Thyroid gland (tissue), 4 donors: ENCODE measurements at regions of chr2 and their contacts with region 1.

Region 1: DNA sequence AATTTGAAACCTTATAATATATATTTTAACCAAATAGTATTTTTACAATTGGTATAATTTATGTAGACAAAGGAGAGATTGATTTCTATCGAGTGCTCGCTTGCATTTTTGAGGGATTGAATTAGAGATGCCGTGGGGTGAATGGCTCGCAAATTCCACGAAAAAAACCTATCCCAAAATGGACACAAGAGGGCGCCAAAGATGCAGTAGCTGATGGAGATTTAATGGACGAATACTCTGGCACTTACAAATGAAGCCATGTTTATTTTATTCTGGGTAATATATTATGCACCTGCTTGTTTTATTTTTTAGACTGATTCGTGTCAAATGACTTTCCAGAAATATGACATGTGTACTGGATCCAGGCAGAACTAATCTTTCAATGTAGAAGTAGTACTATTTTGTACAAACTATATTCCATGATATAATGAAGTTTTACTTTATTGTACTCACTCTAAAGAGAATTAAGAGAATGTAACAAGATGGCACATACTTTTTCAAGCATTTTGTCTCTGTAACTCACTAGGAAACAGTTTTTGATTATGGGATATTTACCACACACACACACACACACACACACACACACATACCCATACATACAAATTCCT is 505.4 kb downstream of the PLCL1 start:
- DNase-seq: peak; percentile 25 to 34
- H3K4me3 ChIP-seq: no peak overlapping the region
- H3K27ac ChIP-seq: no peak overlapping the region
- H3K4me1 ChIP-seq: no peaks in the 10 kb centered on the region
- H3K27me3 ChIP-seq: no peaks in the 10 kb centered on the region
- CTCF ChIP-seq: peak; percentile 47 to 90 (median 58)
- POLR2A ChIP-seq: no peak

Region 2: GRCh38 chr2:198162276-198162675 is 147.5 kb before region 1 on chr2:
- intact Hi-C with region 1: no loop called
- DNase-seq: no peak
- H3K4me3 ChIP-seq: no peak overlapping the region
- H3K27ac ChIP-seq: no peak overlapping the region
- H3K4me1 ChIP-seq: no peaks in the 10 kb centered on the region
- H3K27me3 ChIP-seq: no peaks in the 10 kb centered on the region
- CTCF ChIP-seq: no peak
- POLR2A ChIP-seq: no peak

Region 3: DNA sequence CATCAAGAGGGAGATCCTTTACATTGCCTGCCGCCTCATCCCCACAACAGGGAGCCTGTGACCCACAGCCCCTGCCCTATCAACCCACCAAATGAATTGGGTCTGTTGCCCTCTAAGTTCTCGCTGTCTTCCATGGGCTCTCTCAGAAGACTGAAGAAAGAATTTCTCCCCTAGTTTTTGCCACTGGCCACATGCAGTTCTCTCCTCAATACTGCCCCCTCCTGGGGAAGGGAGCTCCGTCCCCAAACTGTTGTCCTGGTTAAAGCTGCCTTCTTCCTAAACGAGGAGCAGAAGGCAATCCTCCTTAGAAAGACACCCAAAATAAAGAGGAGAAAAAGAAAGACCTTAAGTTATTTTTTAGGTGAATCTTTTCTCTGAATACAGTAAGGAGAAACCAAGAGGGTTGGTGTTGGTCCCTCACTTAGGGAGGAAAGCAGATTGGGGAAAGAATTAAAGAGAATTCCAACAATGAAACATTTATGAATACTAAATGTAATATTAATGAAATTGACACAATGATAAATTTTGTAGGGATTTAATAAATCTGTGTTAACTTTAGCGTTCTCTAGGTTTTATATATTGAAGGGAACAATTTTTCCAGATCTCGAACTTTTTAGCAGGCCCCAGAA is 1179.1 kb after region 1 on chr2:
- intact Hi-C with region 1: loop called (anchors 10 kb)
- DNase-seq: peak; percentile 38 to 54
- H3K4me3 ChIP-seq: no peak overlapping the region
- H3K27ac ChIP-seq: no peak overlapping the region
- H3K4me1 ChIP-seq: no peaks in the 10 kb centered on the region
- H3K27me3 ChIP-seq: no peaks in the 10 kb centered on the region
- CTCF ChIP-seq: peak in 5 of 6 experiments; percentile 15 to 72 (median 38)
- POLR2A ChIP-seq: no peak